Right ventricle myocardium superior (tissue), 1 donor: ENCODE measurements at regions of chr7 and their contacts with region 1.

Region 1: GRCh38 chr7:85554236-85555178 is 367.7 kb upstream of the SEMA3D start:
- DNase-seq: no peak
- ATAC-seq: peak; percentile 41

Region 2: DNA sequence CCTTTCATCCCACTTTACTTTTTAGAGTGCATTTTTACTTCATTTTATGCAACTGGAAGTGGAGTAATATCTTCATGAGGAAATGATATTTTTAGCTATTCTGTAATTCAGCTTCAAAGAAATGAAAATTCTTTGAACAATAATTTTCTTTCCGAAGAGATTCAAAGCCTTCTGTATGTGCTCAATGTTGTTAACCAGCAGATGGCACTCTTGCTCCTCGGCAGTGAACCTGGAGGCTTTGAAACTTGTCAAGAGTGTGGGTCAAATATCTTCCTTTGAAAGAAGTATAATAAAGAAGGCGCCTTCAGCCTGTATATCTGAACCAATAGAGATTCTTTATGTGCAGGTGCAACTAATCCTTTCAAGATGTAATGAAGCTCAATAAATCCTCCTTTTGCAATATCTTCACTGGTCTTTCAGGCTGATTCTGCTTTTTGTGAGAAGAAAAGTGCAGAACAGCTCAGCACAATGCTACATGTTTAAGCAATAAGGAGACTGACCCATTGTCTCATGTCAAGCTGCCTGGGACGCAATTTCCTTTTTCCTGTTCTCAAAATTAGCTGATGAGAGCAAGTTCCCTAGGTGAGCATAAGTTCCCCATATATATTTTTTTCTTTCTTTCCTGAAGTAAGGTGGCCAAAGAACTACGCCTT is 1618.3 kb before region 1 on chr7:
- intact Hi-C with region 1: loop called (anchors 10 kb)
- DNase-seq: no peak
- ATAC-seq: peak; percentile 80

Region 3: DNA sequence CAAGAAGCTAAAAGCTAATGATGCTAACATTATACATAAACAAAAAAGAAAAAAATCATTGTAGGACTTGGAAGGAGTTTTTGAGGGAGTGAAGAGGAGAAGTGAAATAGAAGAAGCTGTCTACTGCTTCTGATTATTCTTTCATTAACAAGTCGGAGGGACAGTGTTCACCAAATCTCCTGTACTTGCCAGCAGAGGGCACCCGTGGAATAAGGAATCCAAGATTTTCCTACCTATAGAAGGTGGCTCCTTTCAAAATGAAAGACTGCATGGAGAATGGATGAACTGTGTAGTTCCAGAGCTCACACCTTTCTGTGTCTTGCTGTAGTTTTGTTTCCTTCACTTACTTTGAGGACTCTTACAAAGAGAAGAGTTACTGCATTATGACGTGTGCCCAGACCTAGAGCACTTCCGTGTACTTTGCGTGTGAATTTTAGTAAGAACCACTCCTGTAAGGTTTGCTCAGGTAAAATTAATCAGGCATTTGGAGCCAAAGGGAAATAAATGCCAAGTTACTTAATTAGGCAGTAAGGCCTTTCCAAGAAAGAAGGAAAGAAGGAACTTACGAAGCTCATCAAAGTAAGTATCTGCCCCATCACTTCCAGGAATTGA is 512.8 kb before region 1 on chr7:
- intact Hi-C with region 1: loop called (anchors 5 kb)
- DNase-seq: peak; percentile 47
- ATAC-seq: peak; percentile 75

Region 4: GRCh38 chr7:85489498-85489897 is 65.0 kb before region 1 on chr7:
- intact Hi-C with region 1: no loop called
- DNase-seq: no peak
- ATAC-seq: no peak